GM18951 (cell line): ENCODE measurements at regions of chr4 and their contacts with region 1.

Region 1: DNA sequence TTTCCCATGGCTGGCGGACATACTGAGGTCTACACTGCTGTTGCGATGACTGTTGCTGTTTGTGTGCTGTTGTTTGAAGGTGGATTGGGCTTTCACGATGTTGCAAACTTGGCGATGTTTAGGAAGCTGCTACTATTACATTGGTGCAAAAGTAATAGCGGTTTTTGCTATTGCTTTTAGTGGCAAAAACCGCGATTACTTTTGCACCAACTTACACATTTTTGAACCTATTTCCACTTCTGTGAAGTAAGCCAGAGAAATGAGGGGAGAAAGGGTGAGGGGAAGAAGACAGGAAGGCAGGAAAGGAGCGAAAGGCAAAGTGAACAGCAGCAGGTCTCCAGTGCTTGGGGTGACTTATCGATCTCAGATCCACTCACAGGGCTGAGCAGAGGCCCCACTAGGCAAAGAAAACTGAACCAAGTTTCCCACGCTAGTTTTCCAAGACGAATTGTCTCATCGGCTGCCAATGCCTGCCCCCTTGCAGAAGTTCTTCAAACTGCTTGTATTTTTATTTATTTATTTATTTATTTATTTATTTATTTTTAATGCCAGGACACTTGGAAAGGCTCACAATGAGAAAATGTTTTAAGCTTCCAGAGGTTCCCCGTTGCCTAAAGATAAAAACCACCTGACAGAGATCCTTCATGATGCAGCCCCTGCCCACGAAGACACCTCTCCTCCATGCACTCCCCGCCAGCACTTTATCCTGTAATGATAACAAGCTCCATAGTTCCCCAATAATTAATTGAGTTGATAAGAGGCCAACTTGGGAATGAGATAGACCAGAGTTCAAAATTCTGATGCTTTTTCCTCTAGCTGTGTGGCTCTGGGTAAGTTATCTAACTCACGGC is 43.3 kb downstream of the QDPR start:
- POLR2A ChIP-seq: no peak

Region 2: GRCh38 chr4:16289897-16290554 is 1178.6 kb before region 1 on chr4:
- in situ Hi-C with region 1: loop called (anchors 25 kb)
- POLR2A ChIP-seq: no peak

Region 3: GRCh38 chr4:17296921-17297890 is 171.4 kb before region 1 on chr4:
- in situ Hi-C with region 1: no loop called
- POLR2A ChIP-seq: no peak

Region 4: DNA sequence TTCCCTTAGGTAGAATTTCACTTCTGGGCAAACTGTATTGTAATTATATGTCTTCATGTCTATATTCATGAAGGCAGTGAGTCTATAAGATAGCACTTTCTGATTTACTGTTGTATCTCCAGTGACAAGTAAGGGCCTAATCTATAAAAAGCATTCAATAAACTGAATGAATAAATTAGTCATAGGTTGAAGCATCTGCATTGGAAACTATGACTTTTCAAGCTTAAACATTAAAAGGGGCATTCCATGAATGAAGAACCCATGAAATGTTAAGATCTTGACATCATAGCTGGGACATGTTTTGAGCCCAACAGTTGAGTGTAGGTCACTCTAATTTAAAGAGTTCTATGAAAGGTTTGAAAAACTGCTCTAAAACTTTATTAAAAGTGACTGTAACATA is 712.3 kb after region 1 on chr4:
- in situ Hi-C with region 1: no loop called
- POLR2A ChIP-seq: no peak

Region 5: DNA sequence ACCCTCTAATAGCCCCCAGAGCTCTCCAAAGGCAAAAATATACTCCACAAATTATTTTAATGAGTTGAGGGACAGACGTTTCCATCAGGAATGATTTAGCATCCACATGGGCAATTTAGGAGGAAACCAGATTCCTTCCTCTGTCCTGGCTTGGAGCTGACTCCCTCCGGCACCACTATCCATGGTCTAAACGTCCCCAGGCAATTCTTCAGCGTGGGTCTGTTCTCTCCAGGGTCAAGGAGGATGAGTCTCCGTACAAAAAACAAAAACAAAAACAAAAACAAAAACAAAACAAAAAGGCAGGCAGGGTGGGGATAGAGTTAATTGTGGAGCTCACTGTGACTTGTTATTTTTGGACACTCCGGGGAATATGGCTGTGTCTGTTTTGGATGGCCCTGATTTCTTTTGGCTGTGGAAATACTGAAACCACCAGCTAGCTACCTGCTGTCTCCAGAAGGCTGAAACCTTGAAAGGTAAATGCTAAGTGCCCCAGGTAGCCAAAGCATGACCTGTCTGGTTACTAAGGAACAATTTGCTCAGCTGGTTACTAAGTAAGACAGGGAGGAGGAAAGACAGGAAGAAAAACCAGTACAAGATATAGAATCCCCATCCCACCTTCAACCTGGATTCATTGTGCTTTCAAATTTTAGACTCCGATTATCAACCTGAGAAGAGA is 972.1 kb after region 1 on chr4:
- in situ Hi-C with region 1: no loop called
- POLR2A ChIP-seq: no peak